SK-N-SH (cell line): ENCODE measurements at regions of chr11 and their contacts with region 1.

Region 1: DNA sequence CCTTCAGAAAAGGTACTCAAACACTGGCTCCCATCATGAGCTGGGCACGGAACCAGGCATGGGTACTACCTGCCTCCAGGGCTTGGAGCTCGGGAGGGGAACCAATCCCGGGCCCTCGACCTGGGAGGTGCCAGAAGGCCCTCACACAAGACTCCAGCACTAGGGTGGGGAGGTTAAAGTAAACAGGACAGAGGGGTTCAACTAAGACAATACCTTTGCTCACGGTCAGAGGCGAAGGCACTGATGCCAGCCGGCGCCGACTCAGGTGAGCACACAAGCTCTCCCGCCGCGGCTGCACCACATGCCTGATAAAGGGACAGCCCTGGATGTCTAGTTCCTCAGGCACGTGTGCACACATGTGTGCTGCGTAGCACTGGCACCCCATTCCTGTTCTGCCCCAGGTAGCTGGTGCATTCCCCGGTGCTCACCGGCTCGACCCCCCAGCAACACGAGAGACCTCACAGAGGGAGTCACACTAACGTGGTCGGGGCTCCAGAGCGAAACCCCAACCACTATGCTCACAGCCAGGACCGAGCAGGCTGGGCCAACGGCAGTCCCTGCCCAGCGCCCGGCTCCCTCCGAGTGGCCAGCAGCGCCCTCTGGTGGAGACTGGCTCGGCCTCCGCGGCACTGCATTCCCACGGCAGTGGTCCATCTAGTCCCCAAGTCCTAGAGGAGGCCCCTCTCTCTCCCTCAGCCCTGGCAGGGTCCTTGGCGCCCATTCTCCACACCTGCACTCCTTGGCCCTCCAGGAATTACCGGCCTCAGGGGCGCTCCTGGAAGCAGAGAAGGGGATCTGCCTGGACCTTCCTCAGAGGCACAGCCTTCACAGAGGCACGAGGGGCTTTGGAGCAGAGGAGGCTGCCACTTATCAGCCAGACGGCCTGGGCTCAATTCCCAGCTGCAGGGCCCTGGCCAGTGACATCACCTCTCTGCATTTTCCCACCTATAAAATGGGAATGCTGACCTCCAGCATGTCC is 28.8 kb upstream of the MOB2 start:
- DNase-seq: peak; percentile 96
- H3K4me3 ChIP-seq: peak overlapping the region in 1 of 2 experiments; percentile 50; a peak in 1 of 4 replicates
- H3K27ac ChIP-seq: no peak overlapping the region; a peak in 1 of 4 replicates
- H3K4me1 ChIP-seq: peaks cover 0 to 29% of the 10 kb centered on the region in 2 experiments; a peak in 1 of 4 replicates
- H3K27me3 ChIP-seq: no peaks in the 10 kb centered on the region
- CTCF ChIP-seq: peak; percentile 86
- EP300 ChIP-seq: no peak
- RAD21 ChIP-seq: peak; percentile 91

Region 2: GRCh38 chr11:1202776-1203504 is 312.4 kb before region 1 on chr11:
- CTCF ChIA-PET with region 1: interaction called, 38 read pairs
- POLR2A ChIA-PET with region 1: no interaction called
- DNase-seq: peak; percentile 96
- H3K4me3 ChIP-seq: no peak overlapping the region; a peak in 1 of 4 replicates
- H3K27ac ChIP-seq: no peak overlapping the region
- H3K4me1 ChIP-seq: peaks cover 0 to 10% of the 10 kb centered on the region in 2 experiments; a peak in 1 of 4 replicates
- H3K27me3 ChIP-seq: peaks cover 5% of the 10 kb centered on the region; the same call in 1 of the 2 replicates
- CTCF ChIP-seq: peak; percentile 60
- EP300 ChIP-seq: no peak
- RAD21 ChIP-seq: peak; percentile 75

Region 3: GRCh38 chr11:1401656-1402221 is 113.6 kb before region 1 on chr11:
- CTCF ChIA-PET with region 1: interaction called, 25 read pairs
- POLR2A ChIA-PET with region 1: no interaction called
- DNase-seq: peak; percentile 94
- H3K4me3 ChIP-seq: no peak overlapping the region
- H3K27ac ChIP-seq: peak overlapping the region in 1 of 2 experiments; percentile 79; a peak in 2 of 4 replicates
- H3K4me1 ChIP-seq: peaks cover 0 to 83% of the 10 kb centered on the region in 2 experiments; a peak in 1 of 4 replicates
- H3K27me3 ChIP-seq: no peaks in the 10 kb centered on the region
- CTCF ChIP-seq: no peak
- EP300 ChIP-seq: peak in 1 of 2 experiments; percentile 72; a peak in 1 of 4 replicates
- RAD21 ChIP-seq: peak; percentile 53

Region 4: GRCh38 chr11:1468002-1468401 is 47.4 kb before region 1 on chr11:
- CTCF ChIA-PET with region 1: interaction called, 11 read pairs
- POLR2A ChIA-PET with region 1: no interaction called
- DNase-seq: no peak
- H3K4me3 ChIP-seq: no peak overlapping the region
- H3K27ac ChIP-seq: no peak overlapping the region; a peak in 1 of 4 replicates
- H3K4me1 ChIP-seq: no peaks in the 10 kb centered on the region; a peak in 1 of 4 replicates
- H3K27me3 ChIP-seq: no peaks in the 10 kb centered on the region
- CTCF ChIP-seq: no peak
- EP300 ChIP-seq: no peak
- RAD21 ChIP-seq: no peak

Region 5: GRCh38 chr11:1536065-1536843 is 20.9 kb after region 1 on chr11:
- CTCF ChIA-PET with region 1: interaction called, 11 read pairs
- POLR2A ChIA-PET with region 1: no interaction called
- DNase-seq: no peak
- H3K4me3 ChIP-seq: no peak overlapping the region
- H3K27ac ChIP-seq: no peak overlapping the region
- H3K4me1 ChIP-seq: peaks cover 0 to 16% of the 10 kb centered on the region in 2 experiments; a peak in 1 of 4 replicates
- H3K27me3 ChIP-seq: peaks cover 7% of the 10 kb centered on the region; the same call in 1 of the 2 replicates
- CTCF ChIP-seq: no peak
- EP300 ChIP-seq: no peak
- RAD21 ChIP-seq: no peak

Region 6: GRCh38 chr11:1567721-1568100 is 52.3 kb after region 1 on chr11:
- CTCF ChIA-PET with region 1: no interaction called
- POLR2A ChIA-PET with region 1: no interaction called
- DNase-seq: peak; percentile 25
- H3K4me3 ChIP-seq: no peak overlapping the region
- H3K27ac ChIP-seq: no peak overlapping the region; a peak in 1 of 4 replicates
- H3K4me1 ChIP-seq: peaks cover 0 to 38% of the 10 kb centered on the region in 2 experiments; a peak in 1 of 4 replicates
- H3K27me3 ChIP-seq: peaks cover 3% of the 10 kb centered on the region; the same call in 1 of the 2 replicates
- CTCF ChIP-seq: no peak
- EP300 ChIP-seq: no peak
- RAD21 ChIP-seq: no peak

Region 7: DNA sequence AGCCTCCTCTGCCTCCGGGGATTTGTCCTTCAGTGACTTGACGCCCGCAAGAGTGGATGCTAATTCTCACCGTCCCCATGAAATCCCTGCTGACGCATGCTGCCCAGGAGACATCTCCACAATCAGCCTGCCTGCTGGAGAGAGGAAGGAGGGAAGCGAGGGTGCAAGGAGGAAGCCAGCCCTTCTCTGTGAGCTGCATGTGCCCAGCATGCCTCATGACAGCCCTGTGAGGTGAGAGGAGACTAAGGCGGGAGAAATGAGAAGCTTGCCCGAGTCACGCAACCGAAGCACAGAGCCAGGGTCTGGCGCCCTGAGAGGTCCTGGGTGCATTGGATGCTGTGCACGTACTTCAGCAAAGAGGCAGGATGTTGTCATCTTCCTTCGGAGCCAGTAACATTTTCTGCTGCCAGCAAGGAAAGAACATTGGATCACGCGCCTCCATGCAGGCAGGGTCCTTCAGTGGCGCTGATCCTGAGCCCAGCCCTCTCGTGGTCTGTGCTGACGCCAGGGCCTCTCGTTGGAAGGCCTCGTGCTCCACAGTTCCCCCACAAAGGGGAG is 154.4 kb after region 1 on chr11:
- CTCF ChIA-PET with region 1: no interaction called
- POLR2A ChIA-PET with region 1: no interaction called
- DNase-seq: peak; percentile 27
- H3K4me3 ChIP-seq: no peak overlapping the region
- H3K27ac ChIP-seq: no peak overlapping the region
- H3K4me1 ChIP-seq: no peaks in the 10 kb centered on the region; a peak in 1 of 4 replicates
- H3K27me3 ChIP-seq: no peaks in the 10 kb centered on the region; the same call in 1 of the 2 replicates
- CTCF ChIP-seq: no peak
- EP300 ChIP-seq: no peak
- RAD21 ChIP-seq: no peak